Activated T-helper 2 cell treated with anti-CD3 and anti-CD28 coated beads, Interferon-gamma antibody, Interleukin-2, Interleukin-4, amounts not matched to agents 10 μg/mL and 5 μg/mL and 100 μg/mL, durations not matched to agents 14 hours and 24 hours and 36 hours (primary cell): ENCODE measurements at regions of chr20 and their contacts with region 1.

Region 1: DNA sequence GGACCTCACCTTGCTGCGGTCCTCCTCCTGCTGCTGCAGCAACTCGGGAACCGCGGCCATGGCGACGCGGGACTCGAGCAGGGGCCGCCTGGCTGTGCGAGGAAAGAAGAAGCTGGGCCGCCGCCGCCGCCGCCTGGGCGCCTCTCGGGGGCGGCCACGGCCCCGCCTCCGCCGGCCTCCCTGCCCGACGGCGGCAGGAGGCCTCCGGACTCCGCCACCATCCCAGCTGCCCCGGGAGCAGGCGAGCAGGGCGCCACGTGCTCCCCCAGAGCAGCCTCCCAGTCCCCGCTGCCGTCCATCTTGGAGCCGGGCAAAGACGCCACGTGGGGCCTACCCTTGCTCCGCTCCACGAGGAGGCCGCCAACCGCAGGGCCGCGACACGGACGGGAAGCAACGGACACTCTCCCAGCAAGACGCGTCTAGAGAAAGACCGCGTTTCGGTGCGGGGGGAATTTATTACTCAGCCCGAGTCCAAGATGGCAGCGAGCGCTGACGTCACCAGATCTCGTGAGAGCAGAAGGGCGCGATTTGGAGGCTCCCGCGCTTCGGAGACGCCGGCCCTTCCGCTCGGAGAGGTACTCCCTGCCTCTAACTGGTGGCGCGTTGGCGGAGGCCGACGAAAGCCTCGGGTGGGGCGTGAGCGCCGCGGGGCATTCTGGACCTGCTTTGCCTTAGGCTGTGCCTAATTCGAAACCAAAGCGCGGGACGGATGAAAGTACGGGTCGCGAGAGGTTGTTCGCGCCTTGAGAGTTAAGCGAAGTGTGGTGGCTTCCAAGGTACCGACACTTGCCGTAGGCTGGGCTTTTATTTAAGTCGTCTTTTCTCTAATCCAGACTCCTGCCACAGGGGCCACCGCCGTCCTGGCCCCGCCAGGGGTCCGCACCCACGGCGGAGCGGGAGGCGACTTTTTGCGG is at the starts of genes MGME1 and SNX5:
- DNase-seq: peak; percentile 99
- H3K4me3 Mint-ChIP-seq: peak within 1 kb of the TSS; percentile 98
- H3K27ac Mint-ChIP-seq: peak within 1 kb of the TSS; percentile 99
- H3K4me1 Mint-ChIP-seq: peaks cover 43% of the 10 kb centered on the region
- H3K27me3 Mint-ChIP-seq: no peaks in the 10 kb centered on the region
- total RNA-seq, gene MGME1: 30.0 and 33.0 TPM in 2 replicates
- total RNA-seq, gene SNX5: 225 and 231 TPM in 2 replicates

Region 2: DNA sequence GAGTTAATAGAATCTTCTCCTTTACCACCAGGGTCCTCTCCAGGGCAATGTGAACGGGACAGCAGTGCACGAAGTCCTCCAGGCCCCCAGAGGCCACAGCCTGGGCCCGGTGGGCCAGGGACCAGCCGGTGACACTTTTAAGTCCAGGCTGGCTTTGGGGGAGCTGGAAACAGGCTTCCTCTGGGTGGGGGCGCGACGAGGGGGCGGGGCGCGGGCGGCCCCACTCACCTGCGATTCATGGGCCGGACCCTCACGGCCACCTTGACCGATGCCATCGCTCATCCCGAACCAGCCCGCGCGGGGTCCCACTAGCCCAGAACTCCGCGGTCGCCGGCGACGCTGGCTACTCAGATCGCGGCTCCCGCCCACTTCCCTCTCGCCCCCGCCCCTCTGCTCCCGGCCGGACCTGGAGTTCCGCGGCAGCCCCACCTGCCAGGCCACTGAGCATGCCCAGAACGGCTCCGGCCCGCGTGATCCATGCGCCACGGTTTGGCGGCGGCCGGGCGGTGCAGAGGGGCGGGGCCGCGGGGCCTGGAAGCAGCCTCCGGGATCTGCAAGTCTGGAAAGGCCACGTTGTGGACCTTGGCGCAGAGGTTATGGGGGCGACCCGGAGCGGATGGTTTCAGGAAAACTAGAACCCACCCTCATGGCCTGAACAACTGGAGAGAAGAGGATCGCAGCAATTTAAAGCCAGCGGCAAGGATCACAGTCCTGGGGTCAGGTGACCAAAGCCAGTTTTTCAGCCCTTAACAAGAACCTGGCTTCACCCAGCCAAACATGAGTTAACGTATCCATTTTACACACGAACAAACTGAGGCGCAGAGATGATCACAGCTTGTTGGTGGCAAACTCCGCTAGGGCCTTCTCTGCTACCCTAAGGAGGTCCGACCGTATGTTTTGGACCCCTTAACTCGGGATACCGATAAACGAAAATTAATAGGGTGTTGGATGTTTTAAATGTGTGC is 1395.3 kb before region 1 on chr20 and contains the start of gene KIF16B:
- intact Hi-C with region 1: loop called (anchors 10 kb)
- DNase-seq: peak; percentile 80
- H3K4me3 Mint-ChIP-seq: peak within 1 kb of the TSS; percentile 90
- H3K27ac Mint-ChIP-seq: peak within 1 kb of the TSS; percentile 81
- H3K4me1 Mint-ChIP-seq: peaks cover 26% of the 10 kb centered on the region
- H3K27me3 Mint-ChIP-seq: no peaks in the 10 kb centered on the region
- total RNA-seq, gene KIF16B: 6.2 and 6.8 TPM in 2 replicates

Region 3: GRCh38 chr20:17504898-17505635 is 463.6 kb before region 1 on chr20:
- intact Hi-C with region 1: loop called (anchors 5 kb)
- DNase-seq: peak; percentile 67
- H3K4me3 Mint-ChIP-seq: peak overlapping the region; percentile 83
- H3K27ac Mint-ChIP-seq: peak overlapping the region; percentile 88
- H3K4me1 Mint-ChIP-seq: peaks cover 42% of the 10 kb centered on the region
- H3K27me3 Mint-ChIP-seq: peaks cover 10% of the 10 kb centered on the region

Region 4: DNA sequence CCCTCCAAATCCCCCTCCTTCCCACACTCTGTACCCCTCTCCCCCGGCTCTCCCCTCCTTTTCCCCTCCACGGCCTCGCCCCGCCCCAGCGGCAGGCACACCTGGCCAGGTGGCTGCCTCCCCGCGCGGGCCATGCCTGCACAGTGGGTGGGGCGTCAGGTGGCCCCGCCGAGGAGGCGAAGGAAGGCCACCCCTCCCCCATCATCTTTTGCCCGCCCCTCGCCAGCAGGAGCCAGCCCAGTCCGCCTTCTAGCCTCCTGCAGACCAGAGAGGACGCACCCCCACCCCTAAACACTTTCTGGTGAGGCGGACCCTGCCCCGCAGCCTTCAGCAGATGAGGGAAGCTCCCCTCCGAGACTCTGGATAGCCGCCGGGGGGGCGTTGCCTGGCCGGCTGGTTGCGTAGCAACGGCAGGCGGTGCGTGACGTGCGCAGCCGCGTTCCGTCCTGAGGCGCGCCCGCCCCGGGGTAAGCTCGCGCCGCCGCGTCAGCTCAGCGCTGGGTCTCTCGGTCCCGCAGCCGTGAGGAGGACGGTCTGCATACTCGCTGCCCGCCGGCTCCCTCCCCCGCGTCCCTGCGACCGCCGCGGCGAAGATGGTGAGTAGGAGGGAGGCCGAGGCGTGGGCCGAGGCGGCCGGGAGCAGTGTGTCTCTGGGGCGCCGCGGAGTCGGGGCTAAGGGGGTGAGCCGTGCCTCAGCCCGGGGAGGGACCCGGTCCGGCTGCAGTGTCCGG is 398.8 kb before region 1 on chr20 and contains the start of gene DSTN:
- intact Hi-C with region 1: loop called (anchors 2 kb)
- DNase-seq: peak; percentile 85
- H3K4me3 Mint-ChIP-seq: peak within 1 kb of the TSS; percentile 93
- H3K27ac Mint-ChIP-seq: peak within 1 kb of the TSS; percentile 90
- H3K4me1 Mint-ChIP-seq: peaks cover 22% of the 10 kb centered on the region
- H3K27me3 Mint-ChIP-seq: peaks cover 9% of the 10 kb centered on the region
- total RNA-seq, gene DSTN: 61.2 and 64.3 TPM in 2 replicates

Region 5: DNA sequence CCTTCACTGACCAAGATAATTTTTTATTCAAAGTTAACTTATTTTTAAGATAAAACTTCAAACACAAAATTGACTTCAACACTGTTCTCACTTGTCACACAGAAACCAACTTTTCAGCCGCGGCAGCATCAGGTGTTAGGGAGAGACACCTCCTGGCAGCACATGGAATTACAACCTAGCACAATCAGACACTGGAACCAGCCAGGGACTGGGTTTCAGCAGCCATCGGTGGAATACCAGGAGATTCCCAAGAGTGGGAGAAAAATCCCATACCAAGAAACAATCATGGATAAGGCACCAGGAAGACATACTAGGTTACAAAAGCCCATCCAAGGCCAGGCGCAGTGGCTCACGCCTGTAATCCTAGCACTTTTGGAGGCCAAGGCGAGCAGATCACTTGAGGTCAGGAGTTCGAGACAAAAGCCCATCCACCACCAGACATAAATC is 70.1 kb before region 1 on chr20:
- intact Hi-C with region 1: loop called (anchors 5 kb)
- DNase-seq: peak; percentile 49
- H3K4me3 Mint-ChIP-seq: no peak overlapping the region
- H3K27ac Mint-ChIP-seq: no peak overlapping the region
- H3K4me1 Mint-ChIP-seq: peaks cover 30% of the 10 kb centered on the region
- H3K27me3 Mint-ChIP-seq: peaks cover 21% of the 10 kb centered on the region

Region 6: GRCh38 chr20:17995967-17996819 is 27.6 kb after region 1 on chr20:
- intact Hi-C with region 1: loop called (anchors 1 kb)
- DNase-seq: peak; percentile 39
- H3K4me3 Mint-ChIP-seq: no peak overlapping the region
- H3K27ac Mint-ChIP-seq: peak overlapping the region; percentile 44
- H3K4me1 Mint-ChIP-seq: peaks cover 39% of the 10 kb centered on the region
- H3K27me3 Mint-ChIP-seq: no peaks in the 10 kb centered on the region

Region 7: GRCh38 chr20:18048176-18048575 is 79.6 kb after region 1 on chr20:
- intact Hi-C with region 1: no loop called
- DNase-seq: no peak
- H3K4me3 Mint-ChIP-seq: no peak overlapping the region
- H3K27ac Mint-ChIP-seq: no peak overlapping the region
- H3K4me1 Mint-ChIP-seq: no peaks in the 10 kb centered on the region
- H3K27me3 Mint-ChIP-seq: peaks cover 38% of the 10 kb centered on the region

Region 8: GRCh38 chr20:18287915-18288748 is 319.5 kb after region 1 on chr20 and contains the start of gene ZNF133:
- intact Hi-C with region 1: loop called (anchors 2 kb)
- DNase-seq: peak; percentile 94
- H3K4me3 Mint-ChIP-seq: peak within 1 kb of the TSS; percentile 97
- H3K27ac Mint-ChIP-seq: peak within 1 kb of the TSS; percentile 97
- H3K4me1 Mint-ChIP-seq: peaks cover 18% of the 10 kb centered on the region
- H3K27me3 Mint-ChIP-seq: peaks cover 8% of the 10 kb centered on the region
- total RNA-seq, gene ZNF133: 8.7 and 10.0 TPM in 2 replicates